CD4-positive, alpha-beta T cell (primary cell): ENCODE measurements at regions of chr11 and their contacts with region 1.

Region 1: GRCh38 chr11:32323814-32324130 is 111.6 kb downstream of the WT1 start:
- DNase-seq: no peak
- ATAC-seq: no peak
- H3K4me3 ChIP-seq: no peak overlapping the region
- H3K4me3 Mint-ChIP-seq: no peak overlapping the region
- H3K27ac ChIP-seq: no peak overlapping the region
- H3K27ac Mint-ChIP-seq: no peak overlapping the region
- H3K4me1 ChIP-seq: no peaks in the 10 kb centered on the region
- H3K4me1 Mint-ChIP-seq: no peaks in the 10 kb centered on the region
- H3K27me3 ChIP-seq: no peaks in the 10 kb centered on the region
- H3K27me3 Mint-ChIP-seq: peaks cover 22% of the 10 kb centered on the region
- CTCF ChIP-seq: peak; percentile 20

Region 2: GRCh38 chr11:32615422-32615821 is 291.6 kb after region 1 on chr11:
- CTCF ChIA-PET with region 1: no interaction called
- POLR2A ChIA-PET with region 1: no interaction called
- intact Hi-C with region 1: loop called (anchors 2 to 5 kb)
- DNase-seq: peak in 2 of 14 experiments; percentile 6 to 7
- ATAC-seq: no peak
- H3K4me3 ChIP-seq: no peak overlapping the region
- H3K4me3 Mint-ChIP-seq: no peak overlapping the region
- H3K27ac ChIP-seq: no peak overlapping the region
- H3K27ac Mint-ChIP-seq: no peak overlapping the region
- H3K4me1 ChIP-seq: no peaks in the 10 kb centered on the region
- H3K4me1 Mint-ChIP-seq: no peaks in the 10 kb centered on the region
- H3K27me3 ChIP-seq: no peaks in the 10 kb centered on the region
- H3K27me3 Mint-ChIP-seq: no peaks in the 10 kb centered on the region
- CTCF ChIP-seq: no peak

Region 3: DNA sequence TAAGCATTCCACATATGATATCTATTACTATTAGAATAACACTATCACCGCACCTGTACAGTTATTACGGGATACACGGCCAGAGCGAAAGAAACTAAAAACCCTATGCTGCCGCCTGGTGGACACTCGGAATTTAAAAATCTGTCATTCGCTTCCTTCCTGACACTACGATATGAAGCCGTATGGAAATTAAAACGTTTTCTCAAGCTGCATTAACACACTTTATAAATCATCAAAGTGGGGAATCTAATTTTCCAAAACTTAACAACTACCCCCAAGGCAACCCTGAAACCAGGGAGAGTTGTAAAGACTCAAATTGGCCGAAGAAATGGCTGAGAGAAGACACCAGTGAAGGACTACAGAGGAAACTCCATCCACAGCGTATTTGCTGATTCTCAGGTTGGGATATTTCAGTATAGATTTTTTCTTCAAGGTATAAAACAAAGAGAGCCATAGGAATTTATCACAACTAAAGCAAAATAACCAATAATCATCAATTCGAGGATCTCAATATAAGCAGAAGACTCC is 469.2 kb after region 1 on chr11:
- CTCF ChIA-PET with region 1: interaction called, 9 read pairs
- POLR2A ChIA-PET with region 1: no interaction called
- intact Hi-C with region 1: loop called (anchors 1 to 2 kb)
- DNase-seq: peak; percentile 18 to 74 (median 56)
- ATAC-seq: peak; percentile 56
- H3K4me3 ChIP-seq: no peak overlapping the region
- H3K4me3 Mint-ChIP-seq: peak overlapping the region; percentile 49
- H3K27ac ChIP-seq: no peak overlapping the region
- H3K27ac Mint-ChIP-seq: no peak overlapping the region
- H3K4me1 ChIP-seq: no peaks in the 10 kb centered on the region
- H3K4me1 Mint-ChIP-seq: peaks cover 11% of the 10 kb centered on the region
- H3K27me3 ChIP-seq: no peaks in the 10 kb centered on the region
- H3K27me3 Mint-ChIP-seq: peaks cover 21% of the 10 kb centered on the region
- CTCF ChIP-seq: peak; percentile 81